PC-9 (cell line): ENCODE measurements at regions of chr10 and their contacts with region 1.

Region 1: GRCh38 chr10:5889624-5890451 is at the starts of genes ANKRD16 and FBH1:
- DNase-seq: peak; percentile 85 to 99
- H3K4me3 ChIP-seq: peak within 1 kb of the TSS; percentile 78
- H3K27ac ChIP-seq: no peak within 1 kb of the TSS
- H3K4me1 ChIP-seq: peaks cover 16% of the 10 kb centered on the region
- H3K27me3 ChIP-seq: no peaks in the 10 kb centered on the region
- CTCF ChIP-seq: no peak
- total RNA-seq, gene ANKRD16: 9.8 and 12.2 TPM in 2 replicates
- total RNA-seq, gene FBH1: 68.0 and 90.9 TPM in 2 replicates

Region 2: GRCh38 chr10:5788969-5789368 is 100.9 kb before region 1 on chr10:
- CTCF ChIA-PET with region 1: no interaction called
- POLR2A ChIA-PET with region 1: interaction called, 31 read pairs
- intact Hi-C with region 1: no loop called
- DNase-seq: no peak
- H3K4me3 ChIP-seq: no peak overlapping the region
- H3K27ac ChIP-seq: no peak overlapping the region
- H3K4me1 ChIP-seq: no peaks in the 10 kb centered on the region
- H3K27me3 ChIP-seq: no peaks in the 10 kb centered on the region
- CTCF ChIP-seq: no peak

Region 3: GRCh38 chr10:5813287-5814109 is 76.3 kb before region 1 on chr10 and contains the start of gene GDI2:
- CTCF ChIA-PET with region 1: no interaction called
- POLR2A ChIA-PET with region 1: interaction called, 16 read pairs
- intact Hi-C with region 1: loop called (anchors 5 kb)
- DNase-seq: peak; percentile 81 to 96
- H3K4me3 ChIP-seq: peak within 1 kb of the TSS; percentile 99
- H3K27ac ChIP-seq: peak within 1 kb of the TSS; percentile 94
- H3K4me1 ChIP-seq: peaks cover 25% of the 10 kb centered on the region
- H3K27me3 ChIP-seq: no peaks in the 10 kb centered on the region
- CTCF ChIP-seq: no peak
- total RNA-seq, gene GDI2: 152 and 196 TPM in 2 replicates

Region 4: DNA sequence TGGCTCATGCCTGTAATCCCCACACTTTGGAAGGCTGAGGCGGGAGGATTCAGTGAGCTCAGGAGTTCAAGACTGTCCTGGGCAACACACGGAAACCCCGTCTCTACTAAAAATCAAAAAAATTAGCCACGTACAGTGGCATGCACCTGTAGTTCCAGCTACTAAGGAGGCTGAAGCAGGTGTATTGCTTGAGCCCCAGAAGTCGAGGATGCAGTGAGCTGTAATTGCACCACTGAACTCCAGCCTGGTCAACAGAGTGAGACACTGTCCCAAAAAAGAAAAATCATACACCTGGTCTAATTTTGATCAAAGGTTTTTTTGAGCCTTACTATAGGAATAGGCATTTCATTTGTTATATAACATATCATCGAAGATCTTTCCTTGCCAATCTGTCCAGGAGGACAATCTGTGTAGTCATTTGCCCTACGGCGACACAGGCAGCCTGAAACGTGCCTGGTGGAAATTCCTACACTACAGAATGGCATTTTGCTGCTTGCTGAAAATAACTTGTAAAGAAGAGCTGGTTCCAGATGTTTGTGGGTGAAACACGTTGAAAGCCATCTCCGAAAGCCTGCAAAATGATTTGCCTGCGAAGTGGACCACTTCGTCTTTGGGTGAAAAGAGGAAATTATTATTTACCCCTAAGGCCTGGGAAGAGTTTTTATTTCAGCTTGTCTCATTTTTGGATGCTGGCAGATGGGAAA is 45.3 kb before region 1 on chr10:
- CTCF ChIA-PET with region 1: no interaction called
- POLR2A ChIA-PET with region 1: no interaction called
- intact Hi-C with region 1: no loop called
- DNase-seq: no peak
- H3K4me3 ChIP-seq: no peak overlapping the region
- H3K27ac ChIP-seq: no peak overlapping the region
- H3K4me1 ChIP-seq: no peaks in the 10 kb centered on the region
- H3K27me3 ChIP-seq: no peaks in the 10 kb centered on the region
- CTCF ChIP-seq: no peak

Region 5: DNA sequence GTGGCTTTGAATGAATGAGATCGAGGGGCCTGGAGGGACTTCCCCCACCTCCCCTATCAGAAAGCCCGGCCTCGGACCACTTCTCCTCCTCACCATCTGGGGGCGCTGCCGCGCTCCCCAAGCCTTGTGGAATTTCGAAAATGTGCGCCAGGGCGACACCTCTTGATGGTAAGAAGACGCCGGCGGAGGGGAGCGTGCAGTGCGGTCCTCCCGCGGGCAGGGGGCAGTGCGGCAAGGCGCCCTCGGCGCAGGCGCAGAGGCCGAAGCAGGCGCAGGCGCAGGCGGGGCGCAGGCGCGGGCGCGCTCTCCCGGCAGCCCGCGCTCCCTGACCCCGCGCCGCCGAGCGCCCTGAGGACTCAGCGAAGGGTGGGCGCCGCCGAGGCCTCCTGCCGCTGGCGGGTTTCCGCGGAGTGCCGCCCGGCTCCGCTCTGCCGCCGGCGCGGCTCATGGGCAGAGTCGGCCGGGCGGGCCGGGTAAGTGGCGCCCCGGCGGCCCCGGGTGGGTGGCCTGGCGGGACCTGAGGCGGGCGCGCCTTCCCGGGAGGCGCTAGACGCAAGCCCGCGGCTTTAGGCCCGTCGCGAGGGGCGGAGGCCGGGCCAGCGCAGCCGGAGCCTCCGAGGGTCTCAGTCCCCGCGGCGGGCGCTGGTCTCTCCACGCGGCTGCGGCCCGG is 199.0 kb after region 1 on chr10 and contains the start of gene RBM17:
- CTCF ChIA-PET with region 1: no interaction called
- POLR2A ChIA-PET with region 1: no interaction called
- intact Hi-C with region 1: loop called (anchors 5 kb)
- DNase-seq: peak; percentile 69 to 97
- H3K4me3 ChIP-seq: peak within 1 kb of the TSS; percentile 71
- H3K27ac ChIP-seq: 0 out of 2 replicates have a peak within 1 kb of the TSS, but pooled peaks have one; percentile 19
- H3K4me1 ChIP-seq: peaks cover 16% of the 10 kb centered on the region
- H3K27me3 ChIP-seq: peaks cover 3% of the 10 kb centered on the region; the same call in 1 of the 2 replicates
- CTCF ChIP-seq: peak; percentile 97
- total RNA-seq, gene RBM17: 98.2 and 131 TPM in 2 replicates